Cardiac septum (tissue), 1 donor: ENCODE measurements at regions of chr15 and their contacts with region 1.

Region 1: DNA sequence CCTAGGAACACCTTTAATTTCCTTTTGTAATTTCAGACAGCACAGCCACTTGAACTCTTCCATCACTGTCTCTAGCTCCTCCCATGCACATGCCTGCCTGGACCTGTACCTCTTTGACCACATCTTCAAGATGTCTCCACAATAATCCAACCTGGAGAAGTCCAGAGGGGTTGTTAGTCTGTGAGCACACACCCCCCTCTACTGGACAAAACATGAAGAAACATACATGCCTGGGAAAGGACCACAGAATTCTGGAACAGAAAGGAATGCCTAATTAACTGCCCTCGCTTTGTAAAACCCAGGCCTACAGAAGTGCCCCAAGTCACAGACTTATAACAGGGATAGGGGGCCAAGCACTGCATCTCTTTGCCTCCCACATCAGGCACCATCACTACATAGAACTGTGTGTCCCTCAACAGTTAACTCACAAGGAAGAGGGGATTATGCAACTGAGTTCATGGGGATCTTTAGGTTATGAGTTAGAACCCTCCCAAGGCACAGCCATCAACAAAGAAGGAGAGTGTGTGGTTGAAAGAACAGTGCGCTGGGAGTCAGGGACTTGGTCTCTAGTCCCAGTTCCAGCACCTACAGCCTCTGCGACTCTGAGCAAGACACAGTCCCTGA is 61.7 kb downstream of the FMN1 start:
- DNase-seq: no peak

Region 2: DNA sequence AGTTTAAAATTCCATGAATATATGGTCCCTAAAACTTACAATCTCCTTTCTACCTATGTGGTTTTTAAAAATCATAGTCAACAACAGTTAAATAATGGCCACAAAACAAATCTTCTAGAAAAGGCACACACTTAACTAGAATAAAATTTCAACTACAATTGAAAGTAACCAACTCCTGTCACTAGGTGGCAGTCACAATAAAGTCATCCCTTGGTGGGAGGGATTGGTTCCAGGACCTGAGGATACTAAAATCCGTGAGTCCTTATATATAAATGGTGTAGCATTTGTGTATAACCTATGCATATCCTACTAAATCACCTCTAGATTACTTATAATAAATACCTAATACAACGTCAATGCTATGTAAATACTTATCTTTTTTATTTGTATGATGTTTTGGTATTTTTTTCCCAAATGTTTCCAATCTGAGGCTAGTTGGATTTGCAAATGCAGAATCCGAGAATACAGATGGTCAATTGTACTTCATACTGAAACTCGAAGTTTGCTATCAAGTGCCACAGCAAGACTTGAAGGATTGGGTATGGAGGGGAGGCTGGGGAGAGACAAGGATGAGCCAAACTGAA is 110.9 kb before region 1 on chr15:
- intact Hi-C with region 1: loop called (anchors 5 kb)
- DNase-seq: no peak

Region 3: DNA sequence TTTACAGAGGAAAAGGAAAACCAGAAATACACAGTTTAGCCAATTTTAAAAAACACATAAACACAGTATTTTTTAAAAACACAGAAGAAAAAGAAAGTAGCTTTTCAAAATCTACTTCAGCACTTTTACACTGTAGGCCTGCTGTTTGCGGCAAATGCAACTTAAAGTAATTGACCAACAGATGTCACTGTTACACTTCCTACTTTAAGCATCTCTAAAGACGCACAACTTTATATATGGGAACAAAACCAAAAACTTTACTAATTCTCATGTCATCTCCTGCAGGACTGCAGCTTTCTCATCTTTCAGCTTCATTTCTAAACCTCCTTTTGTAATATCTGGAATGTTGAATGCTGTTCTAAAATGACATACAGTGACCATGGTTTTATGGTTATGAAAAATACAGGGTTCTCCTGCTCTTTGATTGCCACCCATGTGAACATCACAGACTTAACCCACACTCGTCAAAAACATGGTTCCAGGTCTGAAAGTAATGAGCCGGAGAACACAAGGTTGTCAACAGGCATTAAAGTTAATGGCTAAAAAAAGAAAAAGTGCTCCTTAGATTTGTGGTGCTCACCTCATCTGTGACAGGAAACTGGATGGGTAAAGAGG is 46.2 kb before region 1 on chr15:
- intact Hi-C with region 1: loop called (anchors 5 kb)
- DNase-seq: no peak